ENCODE measurements at regions of chr14 and their contacts with region 1.

Region 1: DNA sequence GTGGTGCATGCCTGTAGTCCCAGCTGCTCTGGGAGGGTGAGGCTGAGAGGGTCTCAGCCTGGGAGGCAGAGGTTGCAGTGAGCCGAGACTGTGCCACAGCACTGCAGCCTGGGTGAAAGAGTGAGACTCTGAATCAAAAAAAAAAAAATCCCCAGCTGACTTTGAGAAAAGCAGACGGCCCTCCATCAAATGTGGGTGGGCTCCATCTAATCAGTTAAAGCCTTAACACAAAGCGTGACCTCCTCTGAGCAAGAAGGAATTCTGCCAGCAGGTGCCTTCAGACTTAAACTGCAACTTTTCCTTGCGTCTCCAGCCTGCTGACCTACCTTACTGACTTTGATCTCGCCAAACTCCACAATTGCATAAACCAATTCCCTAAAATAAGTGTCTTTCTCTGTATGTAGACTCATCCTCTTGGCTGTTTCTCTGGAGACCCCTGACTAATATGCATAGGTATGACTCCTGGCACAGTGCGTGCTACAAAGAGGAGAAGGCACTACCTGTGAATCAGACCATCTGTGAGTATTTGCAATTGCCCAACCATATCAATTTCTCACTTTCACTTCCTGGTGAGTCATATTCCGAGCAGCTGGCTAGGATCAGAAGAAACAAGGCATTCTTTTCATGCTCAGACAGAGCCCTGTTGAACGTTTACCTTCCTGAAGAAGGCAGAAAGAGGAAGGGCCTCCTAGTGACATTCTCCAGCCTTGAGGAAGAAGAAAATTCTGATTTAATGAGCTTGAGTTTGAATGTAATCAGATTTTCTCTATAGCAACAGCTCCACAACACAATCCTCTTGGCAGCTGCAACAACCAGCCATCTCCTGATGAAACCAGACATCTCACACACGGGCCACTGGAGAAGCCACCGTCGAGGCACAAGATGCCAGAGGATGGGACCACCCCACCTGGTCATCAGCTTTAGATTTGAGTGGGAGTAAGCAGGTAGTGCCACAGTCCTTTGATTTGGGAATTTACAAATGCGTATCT is 54.3 kb downstream of the CLMN start:
- DNase-seq: peak; percentile 96
- H3K4me3 ChIP-seq: peak overlapping the region in 1 of 3 experiments; percentile 37
- H3K27ac ChIP-seq: peak overlapping the region; percentile 98
- H3K4me1 ChIP-seq: peaks cover 23% of the 10 kb centered on the region
- H3K27me3 ChIP-seq: no peaks in the 10 kb centered on the region
- CTCF ChIP-seq: no peak
- POLR2A ChIP-seq: no peak

Region 2: GRCh38 chr14:94056579-94057308 is 1208.7 kb before region 1 on chr14:
- CTCF ChIA-PET with region 1: no interaction called
- POLR2A ChIA-PET with region 1: no interaction called
- dilution Hi-C with region 1: no loop called
- intact Hi-C with region 1: no loop called
- DNase-seq: no peak
- H3K4me3 ChIP-seq: no peak overlapping the region
- H3K27ac ChIP-seq: no peak overlapping the region
- H3K4me1 ChIP-seq: no peaks in the 10 kb centered on the region
- H3K27me3 ChIP-seq: no peaks in the 10 kb centered on the region
- CTCF ChIP-seq: no peak
- POLR2A ChIP-seq: no peak

Region 3: GRCh38 chr14:94373708-94374107 is 891.7 kb before region 1 on chr14:
- CTCF ChIA-PET with region 1: no interaction called
- POLR2A ChIA-PET with region 1: no interaction called
- dilution Hi-C with region 1: no loop called
- intact Hi-C with region 1: no loop called
- DNase-seq: no peak
- H3K4me3 ChIP-seq: no peak overlapping the region
- H3K27ac ChIP-seq: no peak overlapping the region
- H3K4me1 ChIP-seq: no peaks in the 10 kb centered on the region
- H3K27me3 ChIP-seq: no peaks in the 10 kb centered on the region
- CTCF ChIP-seq: no peak
- POLR2A ChIP-seq: no peak

Region 4: GRCh38 chr14:95174184-95174792 is 91.1 kb before region 1 on chr14:
- CTCF ChIA-PET with region 1: interaction called, 3 read pairs
- POLR2A ChIA-PET with region 1: no interaction called
- dilution Hi-C with region 1: no loop called
- intact Hi-C with region 1: loop called (anchors 5 kb)
- DNase-seq: peak; percentile 49
- H3K4me3 ChIP-seq: no peak overlapping the region
- H3K27ac ChIP-seq: no peak overlapping the region
- H3K4me1 ChIP-seq: peaks cover 11% of the 10 kb centered on the region
- H3K27me3 ChIP-seq: peaks cover 4 to 6% of the 10 kb centered on the region in 2 experiments
- CTCF ChIP-seq: no peak
- POLR2A ChIP-seq: no peak

Region 5: GRCh38 chr14:95291859-95292542 is 26.6 kb after region 1 on chr14:
- CTCF ChIA-PET with region 1: interaction called, 4 read pairs
- POLR2A ChIA-PET with region 1: no interaction called
- dilution Hi-C with region 1: no loop called
- intact Hi-C with region 1: loop called (anchors 1 kb)
- DNase-seq: peak; percentile 62
- H3K4me3 ChIP-seq: no peak overlapping the region
- H3K27ac ChIP-seq: peak overlapping the region; percentile 20
- H3K4me1 ChIP-seq: peaks cover 13% of the 10 kb centered on the region
- H3K27me3 ChIP-seq: no peaks in the 10 kb centered on the region
- CTCF ChIP-seq: no peak
- POLR2A ChIP-seq: no peak

Region 6: DNA sequence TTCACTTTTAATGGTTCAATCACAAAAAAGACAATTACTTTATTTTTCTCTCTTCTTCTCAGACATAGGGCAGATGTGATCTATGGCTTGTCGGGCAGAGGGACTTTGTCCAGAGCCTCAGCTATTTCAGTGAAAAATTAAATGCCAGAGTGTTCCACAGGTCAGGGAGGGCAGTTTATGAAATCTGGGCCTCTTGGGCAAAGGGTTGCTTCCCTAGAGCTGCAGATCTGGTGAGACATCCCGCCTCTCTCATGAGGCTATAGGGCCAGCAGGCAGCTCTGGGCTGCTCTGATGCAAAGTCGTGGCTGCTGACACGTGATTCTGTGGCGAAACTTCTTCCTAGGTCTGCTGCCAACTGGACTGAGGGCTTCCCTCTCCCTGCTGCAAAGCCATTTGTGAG is 48.3 kb after region 1 on chr14:
- CTCF ChIA-PET with region 1: no interaction called
- POLR2A ChIA-PET with region 1: no interaction called
- dilution Hi-C with region 1: no loop called
- intact Hi-C with region 1: loop called (anchors 2 kb)
- DNase-seq: no peak
- H3K4me3 ChIP-seq: no peak overlapping the region
- H3K27ac ChIP-seq: no peak overlapping the region
- H3K4me1 ChIP-seq: peaks cover 15% of the 10 kb centered on the region
- H3K27me3 ChIP-seq: no peaks in the 10 kb centered on the region
- CTCF ChIP-seq: no peak
- POLR2A ChIP-seq: no peak

Measured in endothelial cell of umbilical vein (primary cell).